ENCODE measurements at regions of chr12 and their contacts with region 1.

Region 1: GRCh38 chr12:8038659-8039114 is 6.2 kb downstream of the FOXJ2 start:
- DNase-seq: peak; percentile 57
- ATAC-seq: peak; percentile 79
- H3K4me3 Mint-ChIP-seq: peak overlapping the region; percentile 53
- H3K27ac Mint-ChIP-seq: peak overlapping the region; percentile 69
- H3K4me1 Mint-ChIP-seq: peaks cover 59% of the 10 kb centered on the region
- H3K27me3 Mint-ChIP-seq: no peaks in the 10 kb centered on the region

Region 2: DNA sequence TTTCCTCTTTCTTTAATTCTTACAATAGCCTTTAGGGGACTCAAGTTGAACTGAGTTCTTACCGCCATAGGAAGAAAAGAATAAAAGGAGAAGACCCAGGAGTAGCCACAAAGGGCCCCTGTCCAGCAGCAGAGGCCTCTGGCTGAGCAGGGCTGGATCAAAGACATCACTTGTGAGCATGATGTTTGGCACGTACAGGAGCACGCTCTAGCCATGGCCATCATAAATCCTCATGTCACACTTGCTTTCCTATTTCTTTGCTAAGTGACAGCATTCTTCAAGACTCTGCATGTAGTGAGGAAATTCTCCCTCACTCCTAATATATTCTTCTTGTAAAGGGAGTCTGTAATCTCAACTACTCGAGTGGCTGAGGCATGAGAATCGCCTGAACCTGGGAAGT is 307.2 kb before region 1 on chr12:
- CTCF ChIA-PET with region 1: no interaction called
- POLR2A ChIA-PET with region 1: no interaction called
- DNase-seq: no peak
- ATAC-seq: no peak
- H3K4me3 Mint-ChIP-seq: no peak overlapping the region
- H3K27ac Mint-ChIP-seq: no peak overlapping the region
- H3K4me1 Mint-ChIP-seq: no peaks in the 10 kb centered on the region
- H3K27me3 Mint-ChIP-seq: peaks cover 2% of the 10 kb centered on the region

Region 3: DNA sequence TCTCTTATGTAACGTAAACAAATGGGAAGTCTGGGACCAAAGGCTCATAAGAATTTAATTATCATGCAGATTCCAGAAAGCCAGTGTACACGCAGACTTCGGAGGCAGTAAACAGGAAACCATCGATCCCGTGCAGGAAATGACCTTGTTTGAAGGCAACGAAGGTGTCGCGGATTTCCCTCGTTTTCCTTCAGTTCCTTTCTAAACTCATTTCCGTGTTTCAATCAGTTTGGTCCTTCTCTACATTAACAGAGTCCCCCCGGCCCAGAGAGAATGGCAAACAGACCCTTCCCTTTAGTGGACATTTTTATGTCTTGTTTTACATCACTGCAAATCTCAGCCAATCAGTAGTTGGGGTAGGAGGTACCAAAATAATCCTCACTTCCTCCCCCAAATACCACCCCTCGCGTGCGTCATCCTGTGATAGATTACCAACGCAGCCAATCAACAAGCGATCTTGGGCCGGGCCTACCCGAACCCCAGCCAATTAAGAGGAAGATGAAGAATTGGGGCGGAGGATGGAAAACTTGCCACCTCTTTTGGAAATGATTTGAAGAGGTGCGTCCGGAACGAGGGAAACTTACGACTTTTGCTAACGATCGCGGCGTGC is 12.3 kb before region 1 on chr12:
- CTCF ChIA-PET with region 1: interaction called, 4 read pairs
- POLR2A ChIA-PET with region 1: interaction called, 12 read pairs
- DNase-seq: peak; percentile 99
- ATAC-seq: peak; percentile 96
- H3K4me3 Mint-ChIP-seq: peak overlapping the region; percentile 89
- H3K27ac Mint-ChIP-seq: peak overlapping the region; percentile 99
- H3K4me1 Mint-ChIP-seq: peaks cover 13% of the 10 kb centered on the region
- H3K27me3 Mint-ChIP-seq: peaks cover 4% of the 10 kb centered on the region